ENCODE measurements at regions of chr4 and their contacts with region 1.

Region 1: GRCh38 chr4:48085821-48086607 is 48.0 kb downstream of the TXK start:
- DNase-seq: no peak
- ATAC-seq: no peak
- H3K4me3 Mint-ChIP-seq: no peak overlapping the region
- H3K27ac Mint-ChIP-seq: no peak overlapping the region
- H3K4me1 Mint-ChIP-seq: no peaks in the 10 kb centered on the region
- H3K27me3 Mint-ChIP-seq: peaks cover 5% of the 10 kb centered on the region
- CTCF ChIP-seq: no peak

Region 2: DNA sequence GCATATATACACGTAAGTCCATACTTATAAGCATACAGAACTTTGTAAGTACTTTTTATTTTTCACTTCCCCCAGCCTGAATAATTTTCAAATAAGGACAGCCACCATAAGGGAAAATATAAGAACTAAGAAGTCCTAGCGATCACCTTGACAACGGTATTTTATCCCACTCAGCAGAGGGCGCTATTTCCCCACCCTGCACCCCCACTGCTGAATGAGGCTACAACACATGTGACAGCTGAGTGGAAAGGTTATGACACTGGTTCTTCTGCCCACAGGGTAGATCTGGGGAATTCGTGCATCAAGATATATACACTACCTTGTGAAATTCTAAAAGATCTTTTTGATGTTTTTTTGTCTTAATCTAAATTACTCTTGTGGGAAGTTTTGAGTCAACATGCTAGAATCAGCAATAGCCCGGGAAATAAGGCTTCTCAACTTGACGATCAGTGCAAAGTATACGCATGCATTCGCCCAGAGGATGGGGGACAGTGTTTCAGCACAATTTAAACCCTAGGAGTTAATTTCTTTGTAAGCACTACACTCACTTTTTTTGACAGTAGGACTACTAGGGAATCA is 399.6 kb before region 1 on chr4:
- CTCF ChIA-PET with region 1: no interaction called
- POLR2A ChIA-PET with region 1: no interaction called
- intact Hi-C with region 1: loop called (anchors 1 kb)
- DNase-seq: peak; percentile 19
- ATAC-seq: peak; percentile 37
- H3K4me3 Mint-ChIP-seq: no peak overlapping the region
- H3K27ac Mint-ChIP-seq: no peak overlapping the region
- H3K4me1 Mint-ChIP-seq: no peaks in the 10 kb centered on the region
- H3K27me3 Mint-ChIP-seq: peaks cover 2% of the 10 kb centered on the region
- CTCF ChIP-seq: no peak

Region 3: DNA sequence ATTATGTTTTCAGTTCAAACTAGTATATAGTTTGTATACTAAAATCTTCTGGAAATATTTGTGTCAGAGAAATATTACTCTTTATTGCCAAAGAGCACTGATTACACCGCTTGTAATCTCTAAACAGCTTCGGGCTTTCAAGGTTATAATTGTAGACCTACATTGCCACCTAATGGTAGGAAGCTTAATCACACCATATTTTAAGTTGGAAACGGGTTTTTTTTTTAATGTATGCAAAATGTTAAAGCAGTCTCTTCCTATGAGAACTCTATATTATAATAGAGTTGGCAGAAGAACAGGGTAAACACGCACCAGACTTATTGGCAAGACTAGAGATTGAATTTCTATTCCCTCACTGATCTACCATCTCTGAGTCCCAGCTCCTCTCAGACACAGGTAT is 152.2 kb before region 1 on chr4:
- CTCF ChIA-PET with region 1: interaction called, 6 read pairs
- POLR2A ChIA-PET with region 1: interaction called, 3 read pairs
- intact Hi-C with region 1: loop called (anchors 2 kb)
- DNase-seq: no peak
- ATAC-seq: peak; percentile 64
- H3K4me3 Mint-ChIP-seq: no peak overlapping the region
- H3K27ac Mint-ChIP-seq: no peak overlapping the region
- H3K4me1 Mint-ChIP-seq: peaks cover 8% of the 10 kb centered on the region
- H3K27me3 Mint-ChIP-seq: peaks cover 3% of the 10 kb centered on the region
- CTCF ChIP-seq: no peak

Region 4: DNA sequence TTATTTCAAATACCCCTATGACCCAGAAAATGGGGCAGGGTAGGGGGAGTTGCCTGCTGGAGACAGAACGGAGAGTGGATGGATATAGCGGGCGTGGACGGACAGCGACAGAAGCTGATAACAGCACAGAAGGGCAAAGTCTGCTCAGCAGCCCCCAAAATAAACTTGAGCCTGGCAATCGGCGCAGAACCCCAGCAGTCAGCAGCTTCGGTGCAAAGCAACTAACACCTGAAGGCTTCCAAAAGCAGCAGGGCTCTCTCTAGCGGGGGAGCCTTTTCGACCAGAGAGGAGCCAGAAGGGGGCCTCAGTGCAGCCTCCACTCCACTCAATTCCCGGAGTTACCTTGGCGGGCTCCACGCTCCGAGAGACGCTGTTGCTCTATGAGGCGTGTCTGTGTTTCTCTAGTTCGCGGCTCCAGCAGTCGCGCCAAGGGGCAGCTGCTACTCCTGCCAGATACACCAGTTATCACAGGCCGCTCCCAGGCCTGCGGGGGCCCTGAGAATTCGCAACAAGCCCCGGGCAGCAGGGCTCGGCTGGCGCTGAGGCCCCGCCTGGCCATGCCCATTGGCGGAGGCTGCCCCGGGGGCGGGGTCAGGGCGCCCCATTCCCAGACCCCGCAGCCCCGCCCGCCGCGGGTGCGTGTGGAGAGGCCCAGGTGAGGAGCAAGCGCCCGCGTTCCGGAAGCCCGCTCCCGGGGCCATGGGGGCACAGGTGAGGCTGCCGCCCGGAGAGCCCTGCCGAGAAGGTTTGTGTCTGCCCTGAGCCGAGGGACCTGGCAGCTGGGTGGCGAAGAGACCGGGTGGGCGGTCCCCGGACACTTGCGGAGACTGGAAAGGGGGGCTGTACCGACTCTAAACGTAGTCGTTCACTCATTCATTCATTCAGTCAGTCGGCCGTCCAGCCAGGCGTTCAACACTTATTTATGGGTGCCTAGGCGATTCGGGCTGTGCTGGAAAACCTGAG is 69.6 kb before region 1 on chr4 and contains the starts of genes CNGA1 and NIPAL1:
- CTCF ChIA-PET with region 1: interaction called, 8 read pairs
- POLR2A ChIA-PET with region 1: no interaction called
- intact Hi-C with region 1: loop called (anchors 1 kb)
- DNase-seq: peak; percentile 70
- ATAC-seq: peak; percentile 92
- H3K4me3 Mint-ChIP-seq: peak within 1 kb of the TSS; percentile 83
- H3K27ac Mint-ChIP-seq: no peak within 1 kb of the TSS
- H3K4me1 Mint-ChIP-seq: peaks cover 13% of the 10 kb centered on the region
- H3K27me3 Mint-ChIP-seq: peaks cover 40% of the 10 kb centered on the region
- CTCF ChIP-seq: no peak
- total RNA-seq, gene CNGA1: not detected in 2 replicates
- total RNA-seq, gene NIPAL1: 0.69 and 0.73 TPM in 2 replicates

Region 5: GRCh38 chr4:48047421-48047844 is 38.6 kb before region 1 on chr4:
- CTCF ChIA-PET with region 1: interaction called, 17 read pairs
- POLR2A ChIA-PET with region 1: no interaction called
- intact Hi-C with region 1: no loop called
- DNase-seq: peak; percentile 65
- ATAC-seq: peak; percentile 94
- H3K4me3 Mint-ChIP-seq: peak overlapping the region; percentile 72
- H3K27ac Mint-ChIP-seq: peak overlapping the region; percentile 65
- H3K4me1 Mint-ChIP-seq: peaks cover 63% of the 10 kb centered on the region
- H3K27me3 Mint-ChIP-seq: peaks cover 42% of the 10 kb centered on the region
- CTCF ChIP-seq: no peak

Region 6: GRCh38 chr4:48141048-48141447 is 55.0 kb after region 1 on chr4:
- CTCF ChIA-PET with region 1: no interaction called
- POLR2A ChIA-PET with region 1: interaction called, 4 read pairs
- intact Hi-C with region 1: loop called (anchors 2 kb)
- DNase-seq: no peak
- ATAC-seq: peak; percentile 56
- H3K4me3 Mint-ChIP-seq: no peak overlapping the region
- H3K27ac Mint-ChIP-seq: no peak overlapping the region
- H3K4me1 Mint-ChIP-seq: peaks cover 28% of the 10 kb centered on the region
- H3K27me3 Mint-ChIP-seq: no peaks in the 10 kb centered on the region
- CTCF ChIP-seq: peak; percentile 68